ENCODE measurements at regions of chr5 and their contacts with region 1.

Region 1: DNA sequence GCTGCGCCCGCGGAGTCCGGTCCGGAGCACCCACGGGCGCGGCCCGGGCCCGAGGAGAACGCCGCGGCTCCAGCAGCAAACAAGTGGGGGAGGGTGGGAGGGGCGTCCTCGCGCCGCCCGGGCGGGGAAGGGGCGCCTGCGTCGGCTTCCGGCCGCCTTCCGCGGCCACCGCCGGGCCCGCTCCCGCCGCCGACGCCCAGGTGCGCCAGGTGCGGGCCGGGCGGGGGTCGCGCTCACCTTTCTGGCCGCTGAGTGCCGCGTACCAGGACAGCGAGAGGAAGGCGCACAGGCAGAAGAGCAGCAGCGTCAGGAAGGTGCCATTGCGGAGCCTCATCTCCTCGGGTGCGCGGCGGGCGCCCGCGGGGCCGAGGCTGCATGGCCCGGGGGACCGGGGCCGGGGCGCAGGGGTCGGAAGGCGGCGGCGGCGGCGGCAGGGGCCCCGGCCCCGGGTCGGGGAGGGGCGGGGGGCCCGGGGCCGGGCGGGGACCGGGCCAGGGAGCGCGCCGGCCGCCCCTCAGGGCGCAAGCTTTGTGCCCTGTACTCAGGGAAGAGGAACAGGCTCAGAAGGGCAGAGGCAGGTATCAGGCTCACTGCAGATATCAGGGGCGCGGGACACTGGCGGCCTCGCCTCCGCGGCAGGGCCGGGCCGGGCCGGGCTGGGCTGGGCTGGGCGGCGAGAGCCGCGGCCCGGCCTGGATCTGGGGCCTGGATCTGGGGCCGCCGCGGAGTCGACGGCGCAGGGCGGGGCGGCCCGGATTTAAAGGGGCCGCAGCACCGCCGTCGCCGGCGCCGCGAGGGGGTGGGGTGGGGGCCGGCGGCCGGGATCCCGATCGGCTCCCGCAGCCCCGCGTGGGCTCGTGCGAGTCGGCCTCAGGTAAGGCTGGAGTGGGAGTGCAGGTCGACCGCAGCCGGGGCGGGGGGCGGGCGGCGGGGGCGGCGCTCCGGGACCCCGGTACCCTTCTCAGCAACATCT is at the start of gene MGAT4B:
- DNase-seq: peak; percentile 65 to 93
- H3K4me3 ChIP-seq: peak within 1 kb of the TSS; percentile 73
- CTCF ChIP-seq: no peak
- POLR2A ChIP-seq: no peak
- total RNA-seq, gene MGAT4B: 86.3 to 113 (median 101) TPM

Region 2: DNA sequence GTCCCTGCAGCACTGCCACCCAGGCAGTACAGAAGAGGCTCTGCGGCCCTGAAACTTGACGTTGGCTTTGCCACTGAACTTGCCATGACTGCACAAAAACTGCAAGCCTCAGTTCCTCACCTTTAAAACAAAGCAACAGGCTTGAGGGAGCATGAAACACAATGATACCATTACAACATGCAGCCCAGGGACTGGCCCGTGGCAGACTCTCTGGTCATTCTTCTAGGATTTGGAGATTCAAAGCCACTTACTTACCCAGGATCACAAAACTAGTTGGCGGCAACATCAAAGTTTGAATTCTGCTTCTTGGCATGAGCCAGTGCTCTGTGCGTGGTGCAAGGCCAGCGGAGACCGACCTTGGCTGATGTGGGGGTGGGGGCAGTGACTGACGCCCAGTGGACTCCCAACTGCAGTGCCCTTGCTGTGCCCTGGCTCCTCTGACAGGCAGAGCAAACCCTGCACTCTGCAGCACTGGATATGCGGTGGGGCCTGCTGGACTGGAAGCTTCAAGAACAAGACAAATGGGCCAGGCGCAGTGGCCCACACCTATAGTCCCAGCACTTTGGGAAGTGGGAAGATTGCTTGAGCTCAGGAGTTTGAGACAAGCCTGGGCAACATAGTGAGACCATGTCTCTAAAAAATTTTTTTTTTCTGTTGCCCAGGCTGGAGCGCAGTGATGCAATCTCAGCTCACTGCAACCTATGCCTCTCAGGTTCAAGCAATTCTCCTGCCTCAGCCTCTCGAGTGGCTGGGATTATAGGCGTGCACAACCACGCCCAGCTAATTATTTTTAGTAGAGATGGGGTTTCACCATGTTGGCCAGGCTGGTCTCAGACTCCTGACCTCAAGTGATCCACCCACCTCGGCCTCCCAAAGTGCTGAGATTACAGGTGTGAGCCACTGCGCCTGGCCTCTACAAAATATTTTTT is 33.1 kb after region 1 on chr5:
- intact Hi-C with region 1: loop called (anchors 1 kb)
- DNase-seq: no peak
- H3K4me3 ChIP-seq: no peak overlapping the region
- CTCF ChIP-seq: no peak
- POLR2A ChIP-seq: no peak

Region 3: GRCh38 chr5:179907570-179908324 is 101.2 kb after region 1 on chr5 and contains the start of gene TBC1D9B:
- intact Hi-C with region 1: loop called (anchors 10 kb)
- DNase-seq: peak; percentile 51 to 92
- H3K4me3 ChIP-seq: peak within 1 kb of the TSS; percentile 51
- CTCF ChIP-seq: no peak
- POLR2A ChIP-seq: no peak
- total RNA-seq, gene TBC1D9B: 71.4 to 125 (median 100) TPM

Measured in lower leg skin (tissue), 4 donors.